ENCODE measurements at regions of chr6 and their contacts with region 1.

Region 1: GRCh38 chr6:42532038-42532669 is 31.7 kb upstream of the UBR2 start:
- DNase-seq: no peak
- H3K4me3 ChIP-seq: no peak overlapping the region
- H3K27ac ChIP-seq: no peak overlapping the region
- H3K4me1 ChIP-seq: no peaks in the 10 kb centered on the region
- H3K27me3 ChIP-seq: no peaks in the 10 kb centered on the region
- CTCF ChIP-seq: peak; percentile 54 to 83 (median 62)
- POLR2A ChIP-seq: no peak

Region 2: DNA sequence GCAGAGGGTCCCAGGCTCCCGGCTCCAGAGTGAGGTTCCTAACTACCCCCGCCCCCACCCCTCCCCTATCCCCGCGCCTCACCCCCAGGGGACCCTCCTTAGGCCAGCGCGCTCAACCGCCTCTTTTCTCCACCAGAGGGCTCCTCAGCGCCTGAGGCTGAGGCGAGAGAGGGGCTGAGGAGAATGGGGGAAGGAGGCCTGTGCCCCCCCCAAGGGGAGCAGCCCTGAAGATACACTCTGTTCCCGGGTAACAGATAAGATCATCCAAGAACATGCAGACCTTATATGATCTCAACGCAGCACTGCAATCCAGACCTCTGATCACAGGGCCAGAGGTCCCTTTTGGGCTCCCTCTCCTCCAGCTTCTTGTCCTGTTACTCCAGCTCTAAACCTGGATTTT is 271.2 kb before region 1 on chr6:
- intact Hi-C with region 1: loop called (anchors 10 kb)
- DNase-seq: no peak
- H3K4me3 ChIP-seq: no peak overlapping the region
- H3K27ac ChIP-seq: no peak overlapping the region
- H3K4me1 ChIP-seq: peaks cover 12% of the 10 kb centered on the region
- H3K27me3 ChIP-seq: no peaks in the 10 kb centered on the region
- CTCF ChIP-seq: peak in 2 of 3 experiments; percentile 30 to 44
- POLR2A ChIP-seq: no peak

Region 3: GRCh38 chr6:42440027-42440426 is 92.1 kb before region 1 on chr6:
- intact Hi-C with region 1: no loop called
- DNase-seq: peak in 1 of 2 donors; percentile 77
- H3K4me3 ChIP-seq: no peak overlapping the region
- H3K27ac ChIP-seq: peak overlapping the region; percentile 82
- H3K4me1 ChIP-seq: peaks cover 53% of the 10 kb centered on the region
- H3K27me3 ChIP-seq: no peaks in the 10 kb centered on the region
- CTCF ChIP-seq: no peak
- POLR2A ChIP-seq: no peak

Measured in vagina (tissue), 2 donors.